Posterior cingulate gyrus (tissue), 11 donors: ENCODE measurements at regions of chr18 and their contacts with region 1.

Region 1: DNA sequence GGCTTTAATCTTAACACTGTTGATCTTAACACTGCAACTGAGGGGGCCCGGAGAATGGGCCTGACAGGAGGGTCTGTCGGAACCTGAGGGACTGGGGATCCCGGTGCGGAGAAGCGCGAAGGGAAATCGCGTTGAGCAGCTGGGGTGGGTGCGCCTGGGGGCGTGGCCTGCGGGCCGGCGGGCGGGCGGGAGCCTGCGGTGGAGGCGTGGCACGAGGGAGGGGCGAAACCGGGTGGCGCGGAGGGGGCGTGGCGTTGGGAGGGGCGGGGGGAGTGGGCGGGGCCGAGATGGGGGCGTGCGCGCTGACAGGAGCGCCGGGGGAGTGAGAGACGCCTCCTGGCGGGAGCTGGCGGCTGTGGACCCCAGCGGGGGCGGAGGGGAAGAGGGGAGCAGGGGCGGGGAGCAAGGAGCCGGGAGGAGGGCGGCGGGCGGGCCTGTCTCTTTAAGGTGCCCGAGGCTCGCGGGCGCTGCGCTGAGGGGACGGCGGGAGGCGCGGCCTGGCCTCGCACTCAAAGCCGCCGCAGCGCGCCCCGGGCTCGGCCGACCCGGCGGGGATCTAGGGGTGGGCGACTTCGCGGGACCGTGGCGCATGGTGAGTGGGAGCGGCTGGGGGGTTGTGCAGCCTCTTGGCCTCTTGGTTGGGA is at the start of gene TWSG1:
- DNase-seq: peak; percentile 79 to 98 (median 90)

Region 2: GRCh38 chr18:9066817-9067306 is 267.6 kb before region 1 on chr18:
- intact Hi-C with region 1: loop called (anchors 2 kb)
- DNase-seq: no peak

Region 3: GRCh38 chr18:9136315-9137155 is 197.9 kb before region 1 on chr18 and contains the start of gene ANKRD12:
- intact Hi-C with region 1: loop called (anchors 10 kb)
- DNase-seq: peak; percentile 95 to 100 (median 98)

Region 4: DNA sequence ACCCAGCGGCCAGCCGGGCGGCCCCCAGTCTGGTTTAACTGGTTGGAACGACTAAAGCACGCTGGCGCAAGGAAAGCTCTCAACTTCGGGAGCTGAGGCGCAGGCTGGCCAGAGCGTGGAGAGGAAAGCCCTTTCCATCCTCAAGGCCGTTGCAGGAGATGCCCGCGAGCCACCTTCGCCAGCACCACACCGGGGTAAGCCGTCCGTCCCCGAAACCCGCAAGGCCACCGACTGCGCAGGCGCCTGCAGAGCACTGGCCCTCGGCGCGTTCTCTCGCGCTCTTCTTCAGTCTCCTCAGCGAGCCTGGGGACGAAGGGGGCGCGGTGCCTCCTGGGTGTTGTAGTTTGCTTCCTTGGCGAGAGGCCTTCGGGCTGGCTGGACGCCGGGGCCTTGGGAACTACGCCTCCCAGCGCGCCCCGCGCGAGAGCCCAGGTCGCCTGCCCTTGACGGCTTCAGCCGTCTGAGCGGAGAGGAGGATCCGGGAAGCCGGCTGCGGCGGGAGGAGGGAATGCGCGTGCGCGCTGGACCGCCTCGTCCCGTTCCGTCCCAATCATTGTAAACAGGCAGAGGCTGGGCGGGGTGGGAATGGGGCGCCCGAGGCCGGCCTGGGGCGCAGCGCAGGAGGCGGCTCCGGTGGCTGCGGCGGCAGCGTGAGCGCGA is 140.7 kb after region 1 on chr18 and contains the start of gene RALBP1:
- intact Hi-C with region 1: loop called (anchors 2 kb)
- DNase-seq: peak; percentile 99 to 100 (median 100)